MCF 10A (cell line): ENCODE measurements at regions of chr11 and their contacts with region 1.

Region 1: GRCh38 chr11:46593550-46594373 is at the start of gene AMBRA1:
- DNase-seq: peak; percentile 92
- H3K4me3 Mint-ChIP-seq: peak within 1 kb of the TSS; percentile 88
- H3K27ac Mint-ChIP-seq: peak within 1 kb of the TSS; percentile 96
- H3K4me1 Mint-ChIP-seq: peaks cover 17% of the 10 kb centered on the region
- H3K27me3 Mint-ChIP-seq: no peaks in the 10 kb centered on the region
- CTCF ChIP-seq: no peak
- total RNA-seq, gene AMBRA1: 19.6 and 28.5 TPM in 2 replicates

Region 2: GRCh38 chr11:46554205-46555055 is 39.3 kb before region 1 on chr11:
- CTCF ChIA-PET with region 1: interaction called, 4 read pairs
- POLR2A ChIA-PET with region 1: interaction called, 34 read pairs
- intact Hi-C with region 1: no loop called
- DNase-seq: peak; percentile 87
- H3K4me3 Mint-ChIP-seq: peak overlapping the region; percentile 37
- H3K27ac Mint-ChIP-seq: peak overlapping the region; percentile 66
- H3K4me1 Mint-ChIP-seq: peaks cover 31% of the 10 kb centered on the region
- H3K27me3 Mint-ChIP-seq: no peaks in the 10 kb centered on the region
- CTCF ChIP-seq: no peak

Region 3: DNA sequence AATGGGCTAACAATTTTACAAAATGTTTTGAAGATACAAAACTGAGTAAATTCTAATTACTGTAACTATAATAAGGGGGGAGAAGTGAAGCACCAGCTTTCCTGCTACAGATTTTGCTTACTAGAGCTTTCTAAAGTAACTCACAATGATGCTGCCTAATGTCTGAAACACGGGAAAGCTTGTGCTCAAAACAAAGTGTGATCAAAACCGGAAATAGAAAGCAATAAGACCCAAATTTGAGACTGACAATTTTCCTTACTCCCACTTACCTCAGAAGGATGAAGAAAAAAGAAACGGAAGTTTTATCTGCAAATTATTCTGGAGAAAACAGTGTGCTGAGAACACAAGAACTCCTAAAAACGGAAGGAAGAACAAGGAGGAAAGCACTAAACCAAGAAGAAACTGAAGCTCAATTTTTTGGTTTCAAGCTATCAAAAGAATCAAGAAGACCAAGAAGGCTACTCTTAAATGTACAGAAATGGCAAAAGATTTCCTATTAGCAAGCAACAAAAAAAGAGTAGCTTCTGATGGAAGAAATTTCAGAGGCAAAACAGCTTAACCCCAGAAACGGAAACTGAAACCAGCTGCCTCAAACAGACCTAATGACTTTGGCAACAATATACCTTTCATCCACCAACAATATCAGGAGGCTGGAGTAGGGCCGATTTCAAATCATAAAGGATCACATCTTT is 33.3 kb before region 1 on chr11:
- CTCF ChIA-PET with region 1: interaction called, 3 read pairs
- POLR2A ChIA-PET with region 1: interaction called, 34 read pairs
- intact Hi-C with region 1: no loop called
- DNase-seq: peak; percentile 54
- H3K4me3 Mint-ChIP-seq: peak overlapping the region; percentile 76
- H3K27ac Mint-ChIP-seq: peak overlapping the region; percentile 94
- H3K4me1 Mint-ChIP-seq: peaks cover 39% of the 10 kb centered on the region
- H3K27me3 Mint-ChIP-seq: no peaks in the 10 kb centered on the region
- CTCF ChIP-seq: no peak

Region 4: GRCh38 chr11:46570790-46571398 is 22.9 kb before region 1 on chr11:
- CTCF ChIA-PET with region 1: interaction called, 4 read pairs
- POLR2A ChIA-PET with region 1: interaction called, 10 read pairs
- intact Hi-C with region 1: no loop called
- DNase-seq: no peak
- H3K4me3 Mint-ChIP-seq: no peak overlapping the region
- H3K27ac Mint-ChIP-seq: no peak overlapping the region
- H3K4me1 Mint-ChIP-seq: no peaks in the 10 kb centered on the region
- H3K27me3 Mint-ChIP-seq: no peaks in the 10 kb centered on the region
- CTCF ChIP-seq: no peak

Region 5: GRCh38 chr11:46607516-46607915 is 13.8 kb after region 1 on chr11:
- CTCF ChIA-PET with region 1: no interaction called
- POLR2A ChIA-PET with region 1: interaction called, 19 read pairs
- intact Hi-C with region 1: no loop called
- DNase-seq: no peak
- H3K4me3 Mint-ChIP-seq: no peak overlapping the region
- H3K27ac Mint-ChIP-seq: no peak overlapping the region
- H3K4me1 Mint-ChIP-seq: no peaks in the 10 kb centered on the region
- H3K27me3 Mint-ChIP-seq: no peaks in the 10 kb centered on the region
- CTCF ChIP-seq: no peak

Region 6: GRCh38 chr11:46700241-46701077 is 106.7 kb after region 1 on chr11 and contains the starts of genes ARHGAP1 and ZNF408:
- CTCF ChIA-PET with region 1: no interaction called
- POLR2A ChIA-PET with region 1: interaction called, 13 read pairs
- intact Hi-C with region 1: no loop called
- DNase-seq: peak; percentile 98
- H3K4me3 Mint-ChIP-seq: peak within 1 kb of the TSS; percentile 99
- H3K27ac Mint-ChIP-seq: peak within 1 kb of the TSS; percentile 98
- H3K4me1 Mint-ChIP-seq: peaks cover 21% of the 10 kb centered on the region
- H3K27me3 Mint-ChIP-seq: no peaks in the 10 kb centered on the region
- CTCF ChIP-seq: no peak
- total RNA-seq, gene ARHGAP1: 61.0 and 63.6 TPM in 2 replicates
- total RNA-seq, gene ZNF408: 14.5 and 15.3 TPM in 2 replicates